Mammary epithelial cell (primary cell): ENCODE measurements at regions of chr18 and their contacts with region 1.

Region 1: DNA sequence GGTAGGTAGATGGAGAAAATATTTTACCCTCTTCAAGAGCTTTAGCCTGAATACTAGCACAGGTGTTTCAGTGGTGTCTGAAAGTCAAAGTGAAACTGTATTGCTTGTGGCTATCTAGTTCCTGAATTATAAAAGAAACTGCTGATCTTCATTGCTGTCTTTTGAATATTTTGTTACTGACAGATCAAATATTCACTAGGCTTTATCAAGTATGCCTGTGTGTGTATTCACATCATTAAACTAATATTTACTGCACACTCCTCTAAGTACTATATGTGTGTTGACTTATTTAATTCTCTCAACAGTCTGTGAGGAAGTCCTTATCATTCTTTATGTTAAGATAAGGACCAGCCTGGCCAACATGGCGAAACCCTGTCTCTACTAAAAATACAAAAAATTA is 139.6 kb downstream of the SOCS6 start:
- DNase-seq: no peak
- H3K4me3 ChIP-seq: no peak overlapping the region
- H3K27ac ChIP-seq: no peak overlapping the region
- H3K4me1 ChIP-seq: peaks cover 23% of the 10 kb centered on the region
- H3K27me3 ChIP-seq: no peaks in the 10 kb centered on the region
- CTCF ChIP-seq: no peak

Region 2: DNA sequence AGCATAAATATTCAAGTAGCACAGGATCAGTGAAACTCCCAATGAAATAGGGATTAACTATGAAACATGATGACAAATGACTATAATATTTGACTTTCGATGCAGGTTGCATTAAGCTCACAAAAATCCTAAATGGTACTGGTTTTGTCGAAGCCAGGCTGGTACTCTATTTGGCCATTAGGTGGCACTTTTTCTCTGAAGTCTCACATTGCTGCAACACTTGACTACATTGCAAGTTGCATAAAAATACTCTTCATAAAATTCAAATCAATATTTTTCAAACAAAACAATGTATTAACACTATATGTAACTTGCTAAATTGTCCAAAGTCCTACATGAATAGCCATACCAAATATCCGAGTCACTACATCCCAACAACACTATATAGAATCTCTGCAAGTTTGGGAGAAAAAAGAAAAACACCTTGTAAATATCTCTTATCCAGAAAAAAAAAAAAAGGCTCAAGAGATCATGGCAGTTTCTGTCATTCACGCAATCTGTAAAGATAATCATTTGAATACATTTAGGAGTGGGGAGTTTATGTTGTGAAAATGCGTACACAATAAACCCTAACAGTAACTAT is 232.5 kb before region 1 on chr18:
- CTCF ChIA-PET with region 1: interaction called, 3 read pairs
- dilution Hi-C with region 1: no loop called
- in situ Hi-C with region 1: loop called (anchors 5 kb)
- intact Hi-C with region 1: no loop called
- DNase-seq: peak; percentile 23
- H3K4me3 ChIP-seq: no peak overlapping the region
- H3K27ac ChIP-seq: no peak overlapping the region
- H3K4me1 ChIP-seq: no peaks in the 10 kb centered on the region
- H3K27me3 ChIP-seq: no peaks in the 10 kb centered on the region
- CTCF ChIP-seq: peak; percentile 81 to 88

Region 3: GRCh38 chr18:70683263-70683662 is 254.8 kb after region 1 on chr18:
- CTCF ChIA-PET with region 1: no interaction called
- dilution Hi-C with region 1: no loop called
- in situ Hi-C with region 1: no loop called
- intact Hi-C with region 1: no loop called
- DNase-seq: no peak
- H3K4me3 ChIP-seq: no peak overlapping the region
- H3K27ac ChIP-seq: no peak overlapping the region
- H3K4me1 ChIP-seq: no peaks in the 10 kb centered on the region
- H3K27me3 ChIP-seq: no peaks in the 10 kb centered on the region
- CTCF ChIP-seq: no peak